Right cardiac atrium (tissue), 5 donors: ENCODE measurements at regions of chr7 and their contacts with region 1.

Region 1: DNA sequence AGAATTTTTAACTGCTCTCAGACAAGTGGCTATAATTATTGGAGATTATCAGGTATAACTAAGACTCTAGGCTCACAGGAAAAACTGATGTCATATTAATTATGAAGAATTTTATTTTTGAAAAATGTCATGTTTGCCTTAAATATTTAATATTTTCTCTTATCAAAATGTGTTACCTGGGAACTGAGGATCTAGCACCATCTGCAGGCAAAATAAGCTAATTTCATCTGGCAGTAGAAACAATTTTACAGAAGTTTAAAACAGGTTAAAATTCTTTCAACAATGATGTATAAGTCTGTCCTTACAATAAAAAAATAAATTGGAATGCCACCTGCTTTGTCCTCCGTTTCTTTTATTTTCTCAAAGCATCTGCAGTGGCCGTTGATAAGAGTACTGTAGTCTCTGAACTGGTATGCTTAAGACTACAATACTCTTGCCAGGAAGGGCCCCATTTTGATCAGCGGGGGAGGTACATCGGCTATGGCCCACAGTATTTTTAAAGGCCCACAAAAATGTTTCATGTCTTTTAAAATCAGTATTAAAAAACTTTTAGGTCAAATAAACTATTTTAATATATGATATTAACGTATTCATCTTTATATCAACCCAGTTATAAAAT is 81.3 kb downstream of the VWDE start:
- DNase-seq: no peak
- ATAC-seq: no peak
- H3K4me3 ChIP-seq: no peak overlapping the region
- H3K27ac ChIP-seq: no peak overlapping the region
- H3K4me1 ChIP-seq: no peaks in the 10 kb centered on the region
- H3K27me3 ChIP-seq: no peaks in the 10 kb centered on the region

Region 2: GRCh38 chr7:11437987-11438386 is 884.4 kb before region 1 on chr7:
- intact Hi-C with region 1: loop called in 1 of 4 experiments (anchors 10 kb)
- DNase-seq: no peak
- ATAC-seq: no peak
- H3K4me3 ChIP-seq: no peak overlapping the region
- H3K27ac ChIP-seq: no peak overlapping the region
- H3K4me1 ChIP-seq: no peaks in the 10 kb centered on the region
- H3K27me3 ChIP-seq: no peaks in the 10 kb centered on the region

Region 3: DNA sequence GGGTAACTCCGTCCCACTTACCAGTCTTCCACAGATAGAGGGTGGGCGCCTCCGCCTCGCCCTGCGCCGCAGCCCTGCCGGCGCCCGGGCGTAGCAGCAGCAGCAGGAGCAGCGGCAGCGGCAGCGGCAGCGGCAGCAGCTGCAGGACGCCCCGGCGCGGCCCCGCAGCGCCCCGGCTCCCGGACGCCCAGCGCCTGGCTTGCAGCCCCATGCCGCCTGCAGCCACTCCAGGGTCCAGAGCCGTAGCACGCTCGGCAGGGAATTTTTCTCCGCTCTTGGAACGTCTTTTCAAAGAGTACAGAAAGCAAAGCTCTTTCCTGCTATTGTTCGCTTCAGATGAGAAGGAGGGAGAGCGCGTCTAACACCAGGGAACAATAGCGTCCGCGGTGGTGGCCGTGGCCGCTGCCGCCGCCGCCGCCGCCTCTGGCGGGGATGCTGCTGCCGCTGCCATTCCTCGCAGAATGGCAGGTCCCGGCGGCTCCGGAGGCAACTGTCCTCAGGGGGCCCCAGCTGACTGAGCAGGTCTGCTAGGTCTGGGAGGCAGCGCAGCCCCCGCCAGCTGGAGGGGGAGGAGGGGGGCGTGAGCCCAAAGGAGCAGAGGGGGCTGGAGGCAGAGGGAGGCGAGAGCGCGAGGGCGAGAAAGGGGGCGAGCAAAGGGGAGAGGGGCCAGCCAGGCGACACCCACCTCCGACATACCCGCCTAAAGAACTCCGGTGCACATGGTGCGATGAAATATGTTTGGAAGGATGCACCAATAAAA is 490.5 kb before region 1 on chr7 and contains the start of gene THSD7A:
- intact Hi-C with region 1: loop called in 2 of 4 experiments (anchors 10 kb)
- DNase-seq: peak; percentile 51 to 81 (median 78)
- ATAC-seq: peak; percentile 94 to 96
- H3K4me3 ChIP-seq: peak within 1 kb of the TSS; percentile 59
- H3K27ac ChIP-seq: peak within 1 kb of the TSS; percentile 34
- H3K4me1 ChIP-seq: no peaks in the 10 kb centered on the region
- H3K27me3 ChIP-seq: no peaks in the 10 kb centered on the region
- total RNA-seq, gene THSD7A: 2.2 to 3.6 (median 2.4) TPM

Region 4: DNA sequence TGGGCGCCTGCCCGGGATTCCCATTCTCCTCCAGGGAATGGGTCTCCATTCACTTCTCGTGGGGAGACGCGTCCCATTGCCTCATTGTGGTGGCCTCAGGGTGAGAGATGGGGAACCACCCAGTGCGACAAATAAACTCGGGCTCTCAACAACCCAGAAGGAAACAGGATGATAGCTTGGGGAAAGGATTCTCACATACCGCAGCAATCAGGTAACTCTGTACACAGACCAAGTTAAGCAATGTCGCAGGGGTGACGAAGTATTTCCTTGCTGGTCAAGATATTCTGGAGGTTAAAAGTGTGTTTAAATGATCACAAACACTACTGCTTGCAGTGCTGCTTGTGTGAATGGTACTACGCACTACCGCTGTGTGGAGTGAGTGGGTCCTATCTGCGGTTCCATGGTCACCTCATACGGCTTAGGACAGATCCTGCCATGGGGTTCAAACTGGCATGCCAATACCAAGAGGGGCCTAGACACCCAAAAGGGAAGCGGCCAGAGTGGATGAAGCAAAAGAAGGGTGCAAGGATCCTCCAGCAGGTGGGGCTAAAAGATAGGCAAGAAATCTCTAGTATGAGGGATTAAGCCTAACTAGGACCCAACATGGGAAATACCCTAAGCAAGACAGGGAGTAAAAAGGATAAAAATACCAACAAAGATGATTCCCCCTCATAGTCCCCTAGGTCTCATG is 255.1 kb before region 1 on chr7:
- intact Hi-C with region 1: loop called in 3 of 4 experiments (anchors 5 to 10 kb)
- DNase-seq: peak in 1 of 3 donors; percentile 33
- ATAC-seq: peak; percentile 51 to 53
- H3K4me3 ChIP-seq: no peak overlapping the region
- H3K27ac ChIP-seq: no peak overlapping the region
- H3K4me1 ChIP-seq: no peaks in the 10 kb centered on the region
- H3K27me3 ChIP-seq: no peaks in the 10 kb centered on the region

Region 5: GRCh38 chr7:12267542-12267941 is 54.9 kb before region 1 on chr7:
- intact Hi-C with region 1: no loop called
- DNase-seq: no peak
- ATAC-seq: no peak
- H3K4me3 ChIP-seq: no peak overlapping the region
- H3K27ac ChIP-seq: no peak overlapping the region
- H3K4me1 ChIP-seq: no peaks in the 10 kb centered on the region
- H3K27me3 ChIP-seq: no peaks in the 10 kb centered on the region

Region 6: GRCh38 chr7:12549106-12549505 is 226.7 kb after region 1 on chr7:
- intact Hi-C with region 1: no loop called
- DNase-seq: no peak
- ATAC-seq: no peak
- H3K4me3 ChIP-seq: no peak overlapping the region
- H3K27ac ChIP-seq: no peak overlapping the region
- H3K4me1 ChIP-seq: no peaks in the 10 kb centered on the region
- H3K27me3 ChIP-seq: no peaks in the 10 kb centered on the region